Activated B cell treated with CpG ODN at 0.5 μM for 24 hours (primary cell): ENCODE measurements at regions of chr14 and their contacts with region 1.

Region 1: GRCh38 chr14:68268197-68268596 is 448.6 kb downstream of the RAD51B start:
- DNase-seq: no peak
- ATAC-seq: peak; percentile 67
- H3K4me3 Mint-ChIP-seq: peak overlapping the region; percentile 63
- H3K27ac Mint-ChIP-seq: peak overlapping the region; percentile 93
- H3K4me1 Mint-ChIP-seq: peaks cover 93% of the 10 kb centered on the region
- H3K27me3 Mint-ChIP-seq: no peaks in the 10 kb centered on the region
- CTCF ChIP-seq: no peak

Region 2: DNA sequence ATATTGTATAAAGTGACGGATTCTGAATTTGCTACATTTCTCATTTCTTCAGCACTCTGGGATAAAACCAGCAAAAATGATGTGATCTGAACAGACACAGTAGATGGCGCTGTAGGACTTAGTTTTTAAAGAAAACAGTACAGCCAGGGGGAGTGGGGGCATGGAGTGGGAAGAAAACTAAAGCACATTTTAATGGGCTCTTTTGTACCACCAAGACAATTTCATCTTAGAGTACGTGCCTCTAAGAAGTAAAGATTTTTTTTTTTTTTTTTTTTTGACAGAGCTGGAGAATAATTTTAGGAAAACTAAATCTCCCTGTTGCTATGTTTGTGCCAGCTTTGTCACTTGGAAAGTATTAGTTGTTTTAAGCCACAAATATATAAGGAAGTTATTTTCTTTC is 324.2 kb before region 1 on chr14:
- CTCF ChIA-PET with region 1: no interaction called
- POLR2A ChIA-PET with region 1: interaction called, 10 read pairs
- intact Hi-C with region 1: no loop called
- DNase-seq: no peak
- ATAC-seq: peak; percentile 54
- H3K4me3 Mint-ChIP-seq: no peak overlapping the region
- H3K27ac Mint-ChIP-seq: no peak overlapping the region
- H3K4me1 Mint-ChIP-seq: peaks cover 8% of the 10 kb centered on the region
- H3K27me3 Mint-ChIP-seq: no peaks in the 10 kb centered on the region
- CTCF ChIP-seq: no peak

Region 3: DNA sequence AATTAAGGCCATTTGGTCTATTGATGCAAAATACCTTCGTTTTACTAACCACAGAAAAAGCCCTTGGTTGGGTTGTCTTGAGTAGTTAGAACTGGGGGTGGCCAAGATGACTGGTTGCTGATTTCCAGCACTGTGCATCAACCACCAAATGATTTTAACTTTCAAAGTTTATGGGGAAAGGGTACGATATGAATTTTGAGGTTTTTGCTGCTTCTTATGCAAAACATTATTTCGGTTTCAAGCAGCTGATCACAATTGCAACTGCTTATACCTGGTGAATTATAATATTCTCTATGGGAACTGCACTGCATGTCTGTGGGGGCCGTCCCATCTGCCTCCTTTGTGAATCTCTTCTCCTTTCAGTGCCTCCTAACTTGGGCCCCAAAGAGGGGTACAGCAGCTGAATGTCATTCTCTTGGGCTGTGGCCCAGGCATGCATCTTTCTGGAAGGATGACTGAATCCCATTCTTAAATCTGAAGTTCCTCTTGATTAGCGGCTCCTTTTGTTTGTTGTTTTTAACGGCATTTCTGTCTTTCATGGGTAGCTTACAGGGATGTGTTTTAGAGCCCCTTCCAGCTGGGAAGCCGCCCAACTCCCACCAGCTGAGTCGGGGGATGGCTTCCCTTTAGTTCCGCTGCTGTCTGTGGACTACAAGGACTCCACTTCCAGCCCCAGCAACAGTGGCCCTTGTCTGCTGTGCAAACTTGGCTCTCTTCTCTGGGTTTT is 44.9 kb after region 1 on chr14:
- CTCF ChIA-PET with region 1: no interaction called
- POLR2A ChIA-PET with region 1: interaction called, 20 read pairs
- intact Hi-C with region 1: loop called (anchors 1 kb)
- DNase-seq: no peak
- ATAC-seq: peak; percentile 84
- H3K4me3 Mint-ChIP-seq: peak overlapping the region; percentile 62
- H3K27ac Mint-ChIP-seq: peak overlapping the region; percentile 94
- H3K4me1 Mint-ChIP-seq: peaks cover 91% of the 10 kb centered on the region
- H3K27me3 Mint-ChIP-seq: no peaks in the 10 kb centered on the region
- CTCF ChIP-seq: no peak

Region 4: DNA sequence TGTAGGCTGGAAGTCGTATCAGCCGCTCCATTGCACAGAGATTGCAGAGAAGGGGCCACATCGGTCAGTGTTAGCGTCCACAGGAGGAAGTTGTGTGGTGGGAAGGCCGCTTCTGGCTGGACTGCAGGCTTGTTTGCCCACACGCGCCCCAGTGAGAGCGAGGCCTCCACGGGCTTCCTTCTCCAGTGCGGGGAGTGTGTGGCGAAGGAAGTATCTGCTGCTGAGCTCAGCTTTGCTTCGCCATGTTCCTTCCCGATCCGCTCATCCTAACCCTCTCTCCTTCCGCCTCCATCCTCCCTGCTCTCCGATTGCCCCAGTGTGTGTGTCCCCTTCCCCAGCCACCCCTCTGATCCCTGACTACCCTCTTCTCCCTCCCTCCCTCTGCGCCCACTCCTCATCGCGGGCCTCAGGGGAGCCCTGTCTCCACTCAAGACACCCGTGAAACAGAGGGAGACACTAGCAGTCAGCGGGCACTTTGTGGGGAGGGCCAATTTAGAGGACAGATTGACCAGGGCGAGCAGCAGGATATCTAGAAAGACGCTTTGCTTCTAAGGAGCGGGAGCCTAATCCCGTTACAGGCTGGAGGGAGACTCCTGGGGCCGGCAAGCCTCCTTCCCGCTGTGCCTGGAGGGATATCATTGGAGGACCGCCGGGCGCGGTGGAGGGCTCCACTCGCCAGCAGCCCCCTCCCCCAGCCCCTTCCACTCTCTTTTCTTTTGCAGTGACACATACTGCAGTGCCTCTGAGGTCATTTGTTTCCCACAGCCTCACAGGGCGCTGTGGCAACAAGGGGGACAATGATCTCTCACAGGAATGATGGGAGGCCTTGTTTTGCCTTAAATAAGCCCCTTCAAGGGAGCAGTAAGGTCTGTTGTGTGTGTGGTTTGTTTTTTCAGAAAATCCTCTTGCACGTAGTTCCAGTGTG is 95.9 kb after region 1 on chr14:
- CTCF ChIA-PET with region 1: interaction called, 3 read pairs
- POLR2A ChIA-PET with region 1: interaction called, 11 read pairs
- intact Hi-C with region 1: no loop called
- DNase-seq: no peak
- ATAC-seq: no peak
- H3K4me3 Mint-ChIP-seq: no peak overlapping the region
- H3K27ac Mint-ChIP-seq: peak overlapping the region; percentile 91
- H3K4me1 Mint-ChIP-seq: peaks cover 92% of the 10 kb centered on the region
- H3K27me3 Mint-ChIP-seq: no peaks in the 10 kb centered on the region
- CTCF ChIP-seq: no peak

Region 5: GRCh38 chr14:68408680-68409079 is 140.5 kb after region 1 on chr14:
- CTCF ChIA-PET with region 1: interaction called, 4 read pairs
- POLR2A ChIA-PET with region 1: interaction called, 20 read pairs
- intact Hi-C with region 1: loop called (anchors 1 kb)
- DNase-seq: no peak
- ATAC-seq: peak; percentile 53
- H3K4me3 Mint-ChIP-seq: peak overlapping the region; percentile 16
- H3K27ac Mint-ChIP-seq: peak overlapping the region; percentile 80
- H3K4me1 Mint-ChIP-seq: peaks cover 75% of the 10 kb centered on the region
- H3K27me3 Mint-ChIP-seq: no peaks in the 10 kb centered on the region
- CTCF ChIP-seq: no peak

Region 6: DNA sequence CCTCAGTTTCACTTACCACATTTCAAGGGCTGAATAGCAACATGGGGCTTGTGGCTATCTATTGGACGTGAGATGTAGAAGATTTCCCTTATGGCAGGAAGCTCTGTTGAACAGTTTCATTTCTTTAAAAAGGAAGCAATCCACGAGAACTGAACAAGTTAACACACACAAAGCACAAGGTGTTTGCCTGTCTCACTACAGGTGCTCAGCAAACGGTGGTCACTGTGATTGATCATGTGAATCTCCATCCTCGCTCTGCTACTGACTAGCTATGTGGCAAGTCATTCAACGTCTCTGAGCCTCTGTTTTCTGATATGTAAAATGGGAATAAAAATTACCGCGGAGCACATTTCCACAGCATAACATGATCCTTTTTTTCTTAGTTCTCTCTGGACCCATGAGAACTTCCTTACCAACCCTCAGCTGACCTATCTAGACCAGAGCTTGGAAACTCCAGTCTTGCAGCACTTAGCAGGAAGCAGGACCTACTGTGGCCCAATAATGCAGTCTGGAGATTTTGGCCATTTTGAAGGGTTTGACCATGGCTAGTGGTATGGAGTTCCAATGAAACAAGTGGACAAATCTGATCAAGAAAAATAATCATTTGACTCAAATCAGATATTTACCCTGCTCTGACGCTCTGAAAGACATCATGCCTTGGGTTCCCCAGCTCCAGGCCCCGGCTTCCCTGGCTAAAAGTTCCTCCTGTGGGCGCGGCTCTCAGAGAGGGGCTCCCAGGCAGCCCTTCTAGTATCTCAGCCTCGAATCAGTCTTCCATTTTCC is 245.8 kb after region 1 on chr14:
- CTCF ChIA-PET with region 1: no interaction called
- POLR2A ChIA-PET with region 1: interaction called, 11 read pairs
- intact Hi-C with region 1: loop called (anchors 5 kb)
- DNase-seq: no peak
- ATAC-seq: peak; percentile 84
- H3K4me3 Mint-ChIP-seq: peak overlapping the region; percentile 64
- H3K27ac Mint-ChIP-seq: peak overlapping the region; percentile 94
- H3K4me1 Mint-ChIP-seq: peaks cover 66% of the 10 kb centered on the region
- H3K27me3 Mint-ChIP-seq: no peaks in the 10 kb centered on the region
- CTCF ChIP-seq: no peak